HEK293 (cell line): ENCODE measurements at regions of chr22 and their contacts with region 1.

Region 1: GRCh38 chr22:37623075-37624016 is 14.7 kb downstream of the GGA1 start:
- H3K4me3 ChIP-seq: no peak overlapping the region
- H3K27ac ChIP-seq: no peak overlapping the region
- H3K4me1 ChIP-seq: no peaks in the 10 kb centered on the region
- CTCF ChIP-seq: peak; percentile 38; the same call in 1 of the 2 replicates

Region 2: GRCh38 chr22:37552524-37553163 is 70.7 kb before region 1 on chr22:
- CTCF ChIA-PET with region 1: no interaction called
- POLR2A ChIA-PET with region 1: no interaction called
- H3K4me3 ChIP-seq: no peak overlapping the region
- H3K27ac ChIP-seq: no peak overlapping the region
- H3K4me1 ChIP-seq: no peaks in the 10 kb centered on the region
- CTCF ChIP-seq: no peak

Region 3: GRCh38 chr22:37633625-37634416 is 10.5 kb after region 1 on chr22:
- CTCF ChIA-PET with region 1: interaction called, 20 read pairs
- POLR2A ChIA-PET with region 1: interaction called, 4 read pairs
- H3K4me3 ChIP-seq: no peak overlapping the region
- H3K27ac ChIP-seq: peak overlapping the region; percentile 7; the same call in 1 of the 2 replicates
- H3K4me1 ChIP-seq: peaks cover 13% of the 10 kb centered on the region
- CTCF ChIP-seq: peak; percentile 61